Naive thymus-derived CD4-positive, alpha-beta T cell (primary cell): ENCODE measurements at regions of chr10 and their contacts with region 1.

Region 1: GRCh38 chr10:22589851-22590514 is 124.4 kb downstream of the PIP4K2A start:
- DNase-seq: no peak
- ATAC-seq: no peak
- H3K4me3 ChIP-seq: no peak overlapping the region
- H3K4me3 Mint-ChIP-seq: no peak overlapping the region
- H3K27ac ChIP-seq: no peak overlapping the region
- H3K27ac Mint-ChIP-seq: peak overlapping the region in 6 of 9 donors; percentile 18 to 59 (median 33)
- H3K4me1 ChIP-seq: peaks cover 0 to 13% of the 10 kb centered on the region in 2 donors
- H3K4me1 Mint-ChIP-seq: peaks cover 22 to 75% (median 67%) of the 10 kb centered on the region in 7 donors
- H3K27me3 ChIP-seq: no peaks in the 10 kb centered on the region
- H3K27me3 Mint-ChIP-seq: no peaks in the 10 kb centered on the region

Region 2: DNA sequence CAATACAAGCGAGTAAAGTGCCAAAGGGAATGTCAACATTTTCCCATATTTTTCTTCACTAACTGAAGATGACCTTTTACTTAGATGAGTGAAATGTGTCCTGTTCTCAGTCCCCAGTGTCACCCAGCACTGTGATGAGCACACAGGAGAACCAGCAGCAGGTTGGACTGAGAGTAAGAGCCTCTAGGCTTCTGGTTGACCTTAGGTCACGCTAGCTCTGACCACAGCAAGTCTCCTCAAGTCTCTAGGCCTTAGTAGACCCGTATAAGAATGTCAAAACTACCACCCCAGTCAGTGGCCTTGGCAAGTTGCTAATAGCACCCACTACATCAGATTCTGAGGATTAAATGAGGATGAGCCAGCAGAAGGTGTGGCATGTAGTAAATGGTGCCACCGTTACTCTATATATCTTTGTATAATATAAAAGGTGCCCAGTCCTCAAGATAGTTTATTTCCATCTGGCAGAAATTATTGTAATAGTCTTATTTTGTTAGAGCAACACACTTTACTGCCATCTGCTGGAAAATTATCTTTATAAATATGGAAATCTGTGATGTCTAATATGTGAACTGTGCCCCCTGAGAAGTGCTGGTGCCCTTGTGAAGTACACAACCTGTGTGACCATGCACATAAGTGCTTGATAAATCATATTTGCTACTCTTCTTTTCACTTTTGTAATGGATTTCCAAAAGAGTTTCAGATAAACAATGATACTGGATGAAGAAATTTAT is 169.0 kb before region 1 on chr10:
- CTCF ChIA-PET with region 1: no interaction called
- POLR2A ChIA-PET with region 1: no interaction called
- intact Hi-C with region 1: no loop called
- DNase-seq: peak in 4 of 9 donors; percentile 15 to 41 (median 40)
- ATAC-seq: peak; percentile 54
- H3K4me3 ChIP-seq: no peak overlapping the region
- H3K4me3 Mint-ChIP-seq: no peak overlapping the region
- H3K27ac ChIP-seq: no peak overlapping the region
- H3K27ac Mint-ChIP-seq: no peak overlapping the region
- H3K4me1 ChIP-seq: no peaks in the 10 kb centered on the region
- H3K4me1 Mint-ChIP-seq: peaks cover 0 to 3% (median 0%) of the 10 kb centered on the region in 7 donors
- H3K27me3 ChIP-seq: no peaks in the 10 kb centered on the region
- H3K27me3 Mint-ChIP-seq: peaks cover 0 to 4% (median 0%) of the 10 kb centered on the region in 5 donors

Region 3: GRCh38 chr10:22573820-22574569 is 16.0 kb before region 1 on chr10:
- CTCF ChIA-PET with region 1: interaction called, 15 read pairs
- POLR2A ChIA-PET with region 1: interaction called, 3 read pairs
- intact Hi-C with region 1: loop called in 1 of 2 experiments (anchors 2 kb)
- DNase-seq: peak in 5 of 9 donors; percentile 16 to 26 (median 24)
- ATAC-seq: peak; percentile 67
- H3K4me3 ChIP-seq: no peak overlapping the region
- H3K4me3 Mint-ChIP-seq: peak overlapping the region in 2 of 10 donors; percentile 24 to 66
- H3K27ac ChIP-seq: no peak overlapping the region
- H3K27ac Mint-ChIP-seq: peak overlapping the region; percentile 8 to 91 (median 62)
- H3K4me1 ChIP-seq: peaks cover 0 to 33% of the 10 kb centered on the region in 2 donors
- H3K4me1 Mint-ChIP-seq: peaks cover 32 to 80% (median 62%) of the 10 kb centered on the region in 7 donors
- H3K27me3 ChIP-seq: no peaks in the 10 kb centered on the region
- H3K27me3 Mint-ChIP-seq: no peaks in the 10 kb centered on the region

Region 4: DNA sequence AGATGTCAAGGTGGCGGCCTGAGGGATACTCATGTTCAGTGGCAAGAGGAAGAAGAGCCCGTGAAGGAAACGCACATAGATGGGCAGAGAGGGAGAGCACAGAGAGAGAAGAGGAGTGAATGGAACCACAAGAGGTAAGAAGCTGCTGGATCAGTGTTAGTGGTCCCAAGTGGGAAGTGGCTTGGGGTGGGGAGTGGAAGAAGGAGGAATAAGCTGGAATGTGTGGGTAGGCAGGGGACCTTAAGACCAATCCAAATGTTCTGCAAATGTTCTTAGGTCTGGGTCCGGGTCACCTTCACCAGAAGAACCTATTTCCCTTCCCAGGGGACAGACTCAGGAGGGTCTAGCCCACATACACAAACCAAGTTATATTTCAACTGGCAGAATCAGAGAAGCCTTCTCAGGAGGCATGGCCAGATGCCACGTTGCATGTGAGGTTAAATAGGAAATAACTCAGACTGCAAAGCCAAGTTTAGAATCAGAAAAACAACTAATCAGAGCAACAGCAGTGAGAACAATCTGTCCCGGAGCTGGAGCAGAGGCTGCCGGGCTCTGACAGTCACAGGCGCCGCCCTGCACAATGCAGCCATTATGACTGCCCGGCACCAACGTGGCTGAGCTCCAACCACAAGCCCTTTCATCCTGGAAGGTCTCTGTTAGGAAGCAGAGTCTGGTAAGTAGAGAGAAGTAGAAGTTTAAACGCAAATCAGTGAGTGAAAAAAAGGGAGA is 259.3 kb after region 1 on chr10:
- CTCF ChIA-PET with region 1: no interaction called
- POLR2A ChIA-PET with region 1: no interaction called
- intact Hi-C with region 1: loop called in 1 of 2 experiments (anchors 5 kb)
- DNase-seq: peak in 5 of 9 donors; percentile 8 to 26 (median 15)
- ATAC-seq: no peak
- H3K4me3 ChIP-seq: no peak overlapping the region
- H3K4me3 Mint-ChIP-seq: peak overlapping the region in 9 of 10 donors; percentile 46 to 79 (median 71)
- H3K27ac ChIP-seq: no peak overlapping the region
- H3K27ac Mint-ChIP-seq: peak overlapping the region in 7 of 9 donors; percentile 11 to 82 (median 58)
- H3K4me1 ChIP-seq: peaks cover 0 to 7% of the 10 kb centered on the region in 2 donors
- H3K4me1 Mint-ChIP-seq: peaks cover 2 to 17% (median 13%) of the 10 kb centered on the region in 7 donors
- H3K27me3 ChIP-seq: no peaks in the 10 kb centered on the region
- H3K27me3 Mint-ChIP-seq: peaks cover 0 to 6% (median 0%) of the 10 kb centered on the region in 5 donors

Region 5: DNA sequence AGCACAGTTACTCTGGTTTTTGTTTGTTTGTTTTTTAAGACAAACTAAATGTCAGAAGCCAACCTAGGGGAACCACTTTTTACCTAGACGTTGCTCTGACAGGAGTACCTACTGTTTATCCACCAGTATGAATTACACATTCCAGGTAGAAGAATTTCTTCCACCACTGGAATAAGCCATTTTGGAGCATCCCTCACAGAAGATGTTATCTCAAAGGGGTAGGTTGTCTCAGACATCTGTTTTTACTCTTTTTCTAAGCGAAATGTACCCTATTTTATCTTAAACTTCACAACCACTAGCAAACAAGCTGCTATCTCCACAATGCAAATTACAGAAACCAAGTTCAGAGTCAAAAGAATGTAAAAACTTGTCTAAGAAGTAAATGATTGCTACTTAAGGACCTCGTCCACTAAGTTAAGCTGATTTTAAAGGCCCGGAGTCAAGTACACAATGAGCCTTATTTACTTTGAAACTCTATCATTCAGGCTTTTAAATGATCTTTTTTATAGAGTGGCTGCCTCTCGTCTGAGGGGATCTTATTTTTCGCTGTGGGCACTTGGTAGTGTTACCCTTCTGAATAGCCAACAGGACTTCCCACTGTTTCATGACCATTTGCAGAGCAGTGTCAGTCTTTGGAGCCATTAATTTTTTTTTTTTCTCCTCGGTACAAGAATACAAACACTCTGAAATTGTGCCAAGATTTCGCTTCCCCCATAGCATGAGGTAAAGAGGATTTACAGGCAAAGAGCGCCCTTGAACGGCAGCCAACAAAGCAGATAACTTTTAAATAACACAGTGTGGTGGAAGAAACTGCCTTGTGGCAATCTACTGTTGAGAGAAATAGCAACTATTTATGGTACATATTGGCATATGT is 322.1 kb after region 1 on chr10:
- CTCF ChIA-PET with region 1: no interaction called
- POLR2A ChIA-PET with region 1: no interaction called
- intact Hi-C with region 1: no loop called
- DNase-seq: no peak
- ATAC-seq: no peak
- H3K4me3 ChIP-seq: no peak overlapping the region
- H3K4me3 Mint-ChIP-seq: no peak overlapping the region
- H3K27ac ChIP-seq: no peak overlapping the region
- H3K27ac Mint-ChIP-seq: no peak overlapping the region
- H3K4me1 ChIP-seq: peaks cover 0 to 6% of the 10 kb centered on the region in 2 donors
- H3K4me1 Mint-ChIP-seq: peaks cover 0 to 12% (median 0%) of the 10 kb centered on the region in 7 donors
- H3K27me3 ChIP-seq: no peaks in the 10 kb centered on the region
- H3K27me3 Mint-ChIP-seq: no peaks in the 10 kb centered on the region